Activated naive CD4-positive, alpha-beta T cell treated with anti-CD3 and anti-CD28 coated beads for 36 hours (primary cell): ENCODE measurements at regions of chr6 and their contacts with region 1.

Region 1: DNA sequence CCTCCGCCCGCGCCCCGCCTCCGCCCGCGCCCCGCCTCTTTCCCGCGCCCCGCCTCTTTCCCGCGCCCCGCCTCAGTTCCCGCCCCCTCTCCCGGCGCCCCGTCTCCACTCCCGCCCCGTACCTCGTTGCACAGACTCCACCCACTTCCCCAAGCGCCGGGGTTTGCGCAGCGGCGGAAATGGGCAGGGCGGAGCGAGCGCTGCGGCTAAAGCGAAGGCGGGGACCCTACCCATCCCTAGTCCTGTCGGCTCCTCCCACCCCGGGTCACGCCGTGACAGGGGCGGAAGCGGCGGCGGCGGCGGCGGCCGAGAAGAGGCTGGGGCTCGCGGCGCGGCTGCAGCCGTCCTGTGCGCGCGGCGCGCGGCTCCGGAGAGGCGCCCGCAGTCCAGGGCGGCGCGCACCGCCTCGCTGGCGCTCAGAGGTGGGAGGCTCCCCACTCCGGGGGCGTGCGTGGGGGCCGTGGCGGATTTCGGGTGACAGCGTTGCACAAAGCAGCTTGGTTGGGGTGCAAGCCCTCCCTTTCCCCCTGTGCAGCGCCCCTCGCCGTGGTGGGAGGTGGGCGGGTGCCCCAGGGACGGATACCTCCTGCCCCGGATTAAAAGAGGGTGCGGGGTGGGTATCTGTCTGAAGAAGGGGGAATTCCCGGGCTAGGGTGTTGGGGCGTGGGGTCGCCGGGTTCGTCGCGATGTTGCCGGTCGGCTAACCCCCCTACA is at the start of gene KDM1B:
- DNase-seq: peak; percentile 98
- H3K4me3 Mint-ChIP-seq: peak within 1 kb of the TSS; percentile 97
- H3K27ac Mint-ChIP-seq: peak within 1 kb of the TSS; percentile 88
- H3K4me1 Mint-ChIP-seq: peaks cover 22% of the 10 kb centered on the region
- H3K27me3 Mint-ChIP-seq: no peaks in the 10 kb centered on the region
- total RNA-seq, gene KDM1B: 14.4 to 15.2 TPM

Region 2: GRCh38 chr6:16481697-16482399 is 1673.5 kb before region 1 on chr6:
- CTCF ChIA-PET with region 1: no interaction called
- intact Hi-C with region 1: loop called (anchors 10 kb)
- DNase-seq: peak; percentile 79
- H3K4me3 Mint-ChIP-seq: peak overlapping the region; percentile 32
- H3K27ac Mint-ChIP-seq: peak overlapping the region; percentile 75
- H3K4me1 Mint-ChIP-seq: peaks cover 70% of the 10 kb centered on the region
- H3K27me3 Mint-ChIP-seq: no peaks in the 10 kb centered on the region

Region 3: GRCh38 chr6:18122124-18123093 is 32.9 kb before region 1 on chr6 and contains the start of gene NHLRC1:
- CTCF ChIA-PET with region 1: no interaction called
- intact Hi-C with region 1: loop called (anchors 1 kb)
- DNase-seq: peak; percentile 85
- H3K4me3 Mint-ChIP-seq: peak within 1 kb of the TSS; percentile 67
- H3K27ac Mint-ChIP-seq: no peak within 1 kb of the TSS
- H3K4me1 Mint-ChIP-seq: peaks cover 9% of the 10 kb centered on the region
- H3K27me3 Mint-ChIP-seq: peaks cover 25% of the 10 kb centered on the region
- total RNA-seq, gene NHLRC1: 0.10 to 0.25 TPM

Region 4: DNA sequence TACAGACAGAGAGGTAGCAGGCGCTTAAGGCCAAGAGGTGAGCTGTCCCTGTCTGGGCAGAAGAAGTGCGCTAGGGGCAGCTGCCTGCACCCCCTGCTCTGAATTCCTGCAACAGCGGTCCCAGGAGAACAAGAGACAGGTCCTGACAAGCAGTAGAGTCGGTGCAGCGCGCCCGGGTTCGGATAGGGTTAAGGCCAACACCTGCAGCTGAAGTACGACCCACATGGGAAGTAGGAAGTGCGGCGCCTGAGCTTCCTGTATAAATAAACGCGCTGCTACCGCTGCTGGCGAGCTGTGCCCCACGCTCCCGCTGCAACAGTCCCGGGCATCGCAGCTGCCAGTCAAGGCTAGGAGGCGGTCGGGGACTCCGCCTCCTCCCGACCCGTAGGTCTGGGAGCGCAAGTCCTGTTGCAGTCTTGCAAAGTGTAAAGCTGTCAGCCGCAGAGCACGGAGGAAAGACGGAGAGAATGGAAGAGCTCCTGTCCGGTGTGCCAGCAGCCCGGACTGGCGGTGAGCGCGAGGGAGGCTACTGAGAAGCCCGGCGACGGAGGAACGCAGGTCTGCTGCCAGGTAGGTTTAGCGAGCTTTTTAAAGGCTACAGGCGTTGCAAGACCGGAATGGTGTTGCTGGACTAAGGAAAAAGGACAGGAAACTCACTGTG is 231.9 kb after region 1 on chr6 and contains the start of gene RNF144B:
- CTCF ChIA-PET with region 1: no interaction called
- intact Hi-C with region 1: loop called (anchors 2 kb)
- DNase-seq: peak; percentile 77
- H3K4me3 Mint-ChIP-seq: peak within 1 kb of the TSS; percentile 86
- H3K27ac Mint-ChIP-seq: peak within 1 kb of the TSS; percentile 32
- H3K4me1 Mint-ChIP-seq: peaks cover 25% of the 10 kb centered on the region
- H3K27me3 Mint-ChIP-seq: no peaks in the 10 kb centered on the region
- total RNA-seq, gene RNF144B: 1.5 to 3.2 TPM

Region 5: GRCh38 chr6:18503593-18504231 is 348.4 kb after region 1 on chr6:
- CTCF ChIA-PET with region 1: no interaction called
- intact Hi-C with region 1: loop called (anchors 5 kb)
- DNase-seq: peak; percentile 56
- H3K4me3 Mint-ChIP-seq: no peak overlapping the region
- H3K27ac Mint-ChIP-seq: no peak overlapping the region
- H3K4me1 Mint-ChIP-seq: no peaks in the 10 kb centered on the region
- H3K27me3 Mint-ChIP-seq: no peaks in the 10 kb centered on the region